ENCODE measurements at regions of chr1 and their contacts with region 1.

Region 1: GRCh38 chr1:165592945-165593823 is 37.9 kb upstream of the MGST3 start:
- DNase-seq: peak; percentile 22
- H3K4me3 ChIP-seq: no peak overlapping the region
- H3K27ac ChIP-seq: no peak overlapping the region
- H3K4me1 ChIP-seq: peaks cover 7% of the 10 kb centered on the region
- H3K27me3 ChIP-seq: peaks cover 31% of the 10 kb centered on the region
- CTCF ChIP-seq: peak; percentile 95

Region 2: DNA sequence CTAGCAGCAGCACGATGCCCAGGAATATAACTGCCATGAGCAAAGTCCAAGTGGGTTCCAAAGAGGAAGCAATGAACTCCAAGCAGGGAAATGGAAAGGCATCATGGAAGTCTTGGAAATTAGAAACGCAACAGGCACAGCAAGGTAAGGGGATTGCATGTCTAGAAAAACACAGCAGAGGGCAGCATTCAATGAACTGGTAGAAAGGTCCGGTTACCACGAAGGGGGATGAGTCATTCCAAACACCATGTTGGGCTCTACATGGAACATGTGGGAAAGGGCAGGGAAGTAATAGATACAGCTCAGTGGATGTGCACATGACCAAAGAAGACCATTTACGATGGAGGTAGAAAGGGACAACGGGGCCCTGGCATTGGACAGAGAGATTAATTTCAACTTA is 184.7 kb before region 1 on chr1:
- intact Hi-C with region 1: loop called (anchors 5 kb)
- DNase-seq: no peak
- H3K4me3 ChIP-seq: no peak overlapping the region
- H3K27ac ChIP-seq: no peak overlapping the region
- H3K4me1 ChIP-seq: peaks cover 25% of the 10 kb centered on the region
- H3K27me3 ChIP-seq: peaks cover 29% of the 10 kb centered on the region
- CTCF ChIP-seq: peak; percentile 61